Caco-2 (cell line): ENCODE measurements at regions of chr2 and their contacts with region 1.

Region 1: DNA sequence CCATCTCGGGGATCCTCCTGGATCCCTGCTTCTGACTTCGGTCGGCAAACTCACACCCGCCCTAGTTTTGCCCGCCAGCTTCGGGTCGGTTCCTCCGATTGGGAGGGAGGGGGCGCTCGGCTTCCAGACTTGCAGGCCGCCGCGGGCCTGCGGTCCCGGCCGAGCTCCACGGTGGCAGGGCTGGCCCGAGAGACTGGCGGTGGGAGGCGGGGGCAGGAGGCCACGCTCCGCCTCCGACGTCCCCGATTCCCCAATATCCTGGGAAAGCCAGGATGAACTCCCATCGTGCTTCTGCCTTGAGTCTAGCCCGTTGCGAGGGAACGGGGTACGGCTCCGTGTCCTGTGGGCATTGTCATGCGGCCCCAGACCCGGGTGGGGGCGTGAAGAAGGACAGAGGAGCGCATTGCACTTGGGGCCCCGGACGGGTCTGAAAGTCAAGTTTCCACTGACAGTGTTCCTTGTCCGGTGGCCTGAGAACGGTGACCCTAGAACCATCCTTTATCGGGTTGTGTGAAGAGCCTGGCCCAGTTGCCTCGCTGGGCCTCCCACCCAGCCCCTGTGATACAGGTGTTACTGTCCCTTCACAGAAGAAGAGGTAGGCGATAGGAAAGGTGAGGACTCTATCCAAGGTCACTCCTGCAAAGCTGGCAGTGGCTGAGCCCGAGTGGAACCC is 2.4 kb upstream of the INHBB start:
- DNase-seq: peak; percentile 85 to 92
- H3K4me3 ChIP-seq: peak overlapping the region; percentile 56
- H3K4me3 Mint-ChIP-seq: peak overlapping the region; percentile 68
- H3K27ac Mint-ChIP-seq: no peak overlapping the region
- H3K4me1 ChIP-seq: peaks cover 8% of the 10 kb centered on the region
- H3K4me1 Mint-ChIP-seq: peaks cover 17% of the 10 kb centered on the region
- H3K27me3 ChIP-seq: no peaks in the 10 kb centered on the region; the same call in 1 of the 2 replicates
- H3K27me3 Mint-ChIP-seq: peaks cover 3% of the 10 kb centered on the region
- CTCF ChIP-seq: peak; percentile 85 to 91

Region 2: GRCh38 chr2:120285056-120285455 is 58.5 kb before region 1 on chr2:
- CTCF ChIA-PET with region 1: no interaction called
- POLR2A ChIA-PET with region 1: no interaction called
- intact Hi-C with region 1: no loop called
- DNase-seq: no peak
- H3K4me3 ChIP-seq: no peak overlapping the region
- H3K4me3 Mint-ChIP-seq: no peak overlapping the region
- H3K27ac Mint-ChIP-seq: no peak overlapping the region
- H3K4me1 ChIP-seq: peaks cover 15% of the 10 kb centered on the region
- H3K4me1 Mint-ChIP-seq: peaks cover 17% of the 10 kb centered on the region
- H3K27me3 ChIP-seq: no peaks in the 10 kb centered on the region
- H3K27me3 Mint-ChIP-seq: no peaks in the 10 kb centered on the region
- CTCF ChIP-seq: no peak

Region 3: GRCh38 chr2:120367649-120368048 is 24.1 kb after region 1 on chr2:
- CTCF ChIA-PET with region 1: no interaction called
- POLR2A ChIA-PET with region 1: no interaction called
- intact Hi-C with region 1: no loop called
- DNase-seq: no peak
- H3K4me3 ChIP-seq: no peak overlapping the region
- H3K4me3 Mint-ChIP-seq: no peak overlapping the region
- H3K27ac Mint-ChIP-seq: no peak overlapping the region
- H3K4me1 ChIP-seq: no peaks in the 10 kb centered on the region
- H3K4me1 Mint-ChIP-seq: no peaks in the 10 kb centered on the region
- H3K27me3 ChIP-seq: no peaks in the 10 kb centered on the region
- H3K27me3 Mint-ChIP-seq: no peaks in the 10 kb centered on the region
- CTCF ChIP-seq: no peak

Region 4: GRCh38 chr2:120390081-120391055 is 46.8 kb after region 1 on chr2:
- CTCF ChIA-PET with region 1: no interaction called
- POLR2A ChIA-PET with region 1: interaction called, 14 read pairs
- intact Hi-C with region 1: no loop called
- DNase-seq: no peak
- H3K4me3 ChIP-seq: no peak overlapping the region
- H3K4me3 Mint-ChIP-seq: no peak overlapping the region
- H3K27ac Mint-ChIP-seq: no peak overlapping the region
- H3K4me1 ChIP-seq: peaks cover 6% of the 10 kb centered on the region
- H3K4me1 Mint-ChIP-seq: peaks cover 3% of the 10 kb centered on the region
- H3K27me3 ChIP-seq: no peaks in the 10 kb centered on the region
- H3K27me3 Mint-ChIP-seq: no peaks in the 10 kb centered on the region
- CTCF ChIP-seq: no peak

Region 5: GRCh38 chr2:120410487-120410886 is 66.9 kb after region 1 on chr2:
- CTCF ChIA-PET with region 1: no interaction called
- POLR2A ChIA-PET with region 1: no interaction called
- intact Hi-C with region 1: no loop called
- DNase-seq: no peak
- H3K4me3 ChIP-seq: no peak overlapping the region
- H3K4me3 Mint-ChIP-seq: no peak overlapping the region
- H3K27ac Mint-ChIP-seq: no peak overlapping the region
- H3K4me1 ChIP-seq: peaks cover 8% of the 10 kb centered on the region
- H3K4me1 Mint-ChIP-seq: peaks cover 11% of the 10 kb centered on the region
- H3K27me3 ChIP-seq: no peaks in the 10 kb centered on the region
- H3K27me3 Mint-ChIP-seq: no peaks in the 10 kb centered on the region
- CTCF ChIP-seq: no peak

Region 6: GRCh38 chr2:120436885-120437603 is 93.5 kb after region 1 on chr2:
- CTCF ChIA-PET with region 1: interaction called, 21 read pairs
- POLR2A ChIA-PET with region 1: interaction called, 3 read pairs
- intact Hi-C with region 1: loop called (anchors 1 kb)
- DNase-seq: peak; percentile 88 to 89
- H3K4me3 ChIP-seq: no peak overlapping the region
- H3K4me3 Mint-ChIP-seq: no peak overlapping the region
- H3K27ac Mint-ChIP-seq: peak overlapping the region; percentile 33
- H3K4me1 ChIP-seq: peaks cover 16% of the 10 kb centered on the region
- H3K4me1 Mint-ChIP-seq: peaks cover 33% of the 10 kb centered on the region
- H3K27me3 ChIP-seq: no peaks in the 10 kb centered on the region
- H3K27me3 Mint-ChIP-seq: no peaks in the 10 kb centered on the region
- CTCF ChIP-seq: peak; percentile 82 to 89

Region 7: DNA sequence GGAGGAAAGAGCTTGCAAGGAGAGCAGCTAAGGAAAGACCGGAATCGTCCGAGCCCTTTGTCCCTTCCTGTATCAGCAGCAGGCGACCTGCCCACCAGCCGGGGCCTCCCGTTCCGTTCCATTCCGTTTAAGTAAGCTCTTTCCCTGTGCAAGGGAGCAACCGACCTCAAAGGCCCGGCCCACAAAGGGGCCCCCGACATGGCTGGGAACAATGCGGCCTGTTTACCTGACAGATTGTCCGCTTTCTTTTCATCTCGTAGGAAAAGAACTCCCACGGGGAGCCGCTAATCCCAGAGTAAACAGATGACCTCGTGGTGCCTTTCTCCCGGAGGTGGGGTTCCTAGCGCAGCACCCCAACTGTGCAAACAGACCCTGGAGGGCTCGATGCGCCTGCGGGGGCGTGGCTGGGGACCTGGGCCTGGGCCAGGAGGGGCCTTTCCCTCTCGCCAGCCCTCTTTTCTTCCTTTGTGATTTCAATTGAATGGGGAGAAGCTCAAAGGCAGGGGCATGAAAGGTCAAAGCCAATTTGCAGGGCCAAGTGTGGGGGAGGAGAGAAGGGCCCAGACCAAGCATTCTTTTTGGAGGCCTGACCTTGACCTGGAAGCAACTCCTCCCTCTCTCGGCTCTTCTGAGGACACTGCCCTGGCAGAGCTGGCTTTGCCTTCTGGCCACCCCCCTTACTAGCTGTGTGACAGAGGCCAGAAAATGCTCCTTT is 122.6 kb after region 1 on chr2:
- CTCF ChIA-PET with region 1: interaction called, 33 read pairs
- POLR2A ChIA-PET with region 1: interaction called, 3 read pairs
- intact Hi-C with region 1: no loop called
- DNase-seq: peak; percentile 95 to 97
- H3K4me3 ChIP-seq: peak overlapping the region; percentile 10
- H3K4me3 Mint-ChIP-seq: peak overlapping the region; percentile 72
- H3K27ac Mint-ChIP-seq: peak overlapping the region; percentile 84
- H3K4me1 ChIP-seq: peaks cover 46% of the 10 kb centered on the region
- H3K4me1 Mint-ChIP-seq: peaks cover 22% of the 10 kb centered on the region
- H3K27me3 ChIP-seq: no peaks in the 10 kb centered on the region
- H3K27me3 Mint-ChIP-seq: no peaks in the 10 kb centered on the region
- CTCF ChIP-seq: no peak

Region 8: DNA sequence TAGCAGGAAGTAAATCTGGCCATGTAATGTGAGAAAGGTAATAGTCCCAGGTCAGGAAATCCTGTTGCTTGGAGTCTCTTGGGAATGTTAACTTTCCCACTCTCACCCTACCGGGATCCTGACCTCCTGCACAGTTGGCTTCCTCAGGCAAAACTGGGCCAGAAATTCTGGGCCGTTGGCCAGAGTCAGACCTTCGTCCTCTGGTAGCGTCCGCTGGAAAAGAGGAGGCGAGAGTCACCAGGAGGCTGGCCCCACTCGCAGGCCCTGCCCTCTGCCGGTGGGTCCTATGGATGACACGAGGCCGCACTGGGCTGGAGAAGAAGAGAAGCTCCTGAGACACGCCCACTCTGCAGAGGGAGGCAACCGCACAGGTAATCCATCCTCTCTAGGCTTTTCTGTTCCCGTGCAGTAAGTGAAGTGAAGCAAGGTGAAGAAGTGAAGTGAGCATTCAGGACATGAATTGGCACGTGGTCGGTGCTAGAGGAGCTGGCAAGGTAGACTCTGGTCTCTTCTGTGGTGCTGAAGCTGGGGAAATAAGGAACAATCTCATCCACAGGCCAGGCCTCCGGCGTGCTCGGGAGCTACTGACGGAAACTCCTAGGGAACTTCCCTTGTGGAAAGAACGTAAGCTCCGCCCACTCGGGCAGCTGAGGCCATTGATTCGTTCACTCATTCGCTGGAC is 209.4 kb after region 1 on chr2:
- CTCF ChIA-PET with region 1: interaction called, 14 read pairs
- POLR2A ChIA-PET with region 1: interaction called, 3 read pairs
- intact Hi-C with region 1: loop called (anchors 5 kb)
- DNase-seq: peak; percentile 81 to 84
- H3K4me3 ChIP-seq: no peak overlapping the region
- H3K4me3 Mint-ChIP-seq: peak overlapping the region; percentile 13
- H3K27ac Mint-ChIP-seq: no peak overlapping the region
- H3K4me1 ChIP-seq: peaks cover 5% of the 10 kb centered on the region; the same call in 1 of the 2 replicates
- H3K4me1 Mint-ChIP-seq: peaks cover 17% of the 10 kb centered on the region
- H3K27me3 ChIP-seq: no peaks in the 10 kb centered on the region
- H3K27me3 Mint-ChIP-seq: no peaks in the 10 kb centered on the region
- CTCF ChIP-seq: peak; percentile 48 to 63

Region 9: DNA sequence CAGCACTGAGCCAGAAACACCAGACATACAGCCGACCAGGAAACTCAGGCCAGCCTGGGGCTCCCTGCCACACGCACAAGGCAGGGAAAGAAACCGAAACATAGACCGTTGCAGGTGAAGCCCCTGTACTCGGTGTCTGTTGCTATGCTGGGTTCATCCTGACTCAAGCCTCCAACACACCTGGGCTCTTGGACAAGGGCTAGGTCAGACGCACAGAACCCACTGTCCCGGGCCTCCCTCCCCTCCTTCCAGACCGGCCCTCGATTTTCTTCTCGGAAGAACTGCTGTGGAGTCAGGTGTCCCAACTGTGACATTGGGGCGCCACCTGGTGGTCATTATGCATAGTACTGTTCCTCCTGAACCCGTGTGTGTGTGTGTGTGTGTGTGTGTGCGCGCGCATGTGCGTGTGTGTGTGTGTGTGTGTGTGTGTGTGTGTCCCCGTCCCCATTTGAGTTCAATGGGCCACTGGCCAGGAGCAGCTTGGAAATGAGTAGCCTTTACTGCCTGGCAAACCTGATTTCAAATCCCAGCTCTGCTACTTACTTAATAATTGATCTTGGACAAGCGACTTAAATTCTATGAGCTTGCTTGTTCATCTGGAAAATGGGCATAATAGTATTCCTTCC is 336.7 kb after region 1 on chr2:
- CTCF ChIA-PET with region 1: interaction called, 31 read pairs
- POLR2A ChIA-PET with region 1: no interaction called
- intact Hi-C with region 1: loop called (anchors 1 kb)
- DNase-seq: peak; percentile 85 to 87
- H3K4me3 ChIP-seq: no peak overlapping the region
- H3K4me3 Mint-ChIP-seq: peak overlapping the region; percentile 24
- H3K27ac Mint-ChIP-seq: peak overlapping the region; percentile 50
- H3K4me1 ChIP-seq: no peaks in the 10 kb centered on the region
- H3K4me1 Mint-ChIP-seq: peaks cover 4% of the 10 kb centered on the region
- H3K27me3 ChIP-seq: no peaks in the 10 kb centered on the region
- H3K27me3 Mint-ChIP-seq: no peaks in the 10 kb centered on the region
- CTCF ChIP-seq: peak; percentile 73 to 75